Astrocyte of the cerebellum (primary cell): ENCODE measurements at regions of chr12 and their contacts with region 1.

Region 1: DNA sequence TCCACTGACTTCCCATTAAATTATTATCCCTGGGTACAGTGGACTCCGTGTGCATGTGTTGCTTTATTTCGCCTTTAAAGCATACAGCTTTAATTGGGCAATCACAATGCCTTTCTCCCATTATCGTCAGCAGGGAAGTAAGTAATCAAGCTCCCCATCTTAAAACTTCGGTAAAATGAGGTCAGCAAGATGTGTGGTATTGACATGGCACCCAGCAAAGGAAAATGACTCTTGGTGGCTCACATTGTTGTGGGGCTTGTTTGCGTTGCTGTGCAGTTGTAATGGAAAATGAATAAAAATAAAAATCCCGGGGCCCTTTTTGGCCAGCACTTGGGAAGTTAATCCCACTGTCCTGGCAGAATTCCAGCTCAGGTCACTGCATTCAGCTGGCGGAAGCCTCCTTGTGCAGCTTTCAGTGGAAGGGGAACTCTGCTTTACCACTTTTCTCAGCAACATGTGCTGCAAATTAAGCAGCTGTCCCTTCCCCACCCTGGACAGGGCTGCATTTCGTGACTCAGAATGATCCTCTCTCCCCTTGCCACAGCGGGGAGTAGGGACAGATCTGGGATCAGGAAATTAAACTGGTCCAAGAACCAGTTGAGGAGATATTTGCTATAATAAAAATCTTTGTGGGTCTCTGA is 13.9 kb upstream of the ATP2A2 start:
- DNase-seq: peak; percentile 68
- H3K4me3 ChIP-seq: no peak overlapping the region
- CTCF ChIP-seq: no peak

Region 2: DNA sequence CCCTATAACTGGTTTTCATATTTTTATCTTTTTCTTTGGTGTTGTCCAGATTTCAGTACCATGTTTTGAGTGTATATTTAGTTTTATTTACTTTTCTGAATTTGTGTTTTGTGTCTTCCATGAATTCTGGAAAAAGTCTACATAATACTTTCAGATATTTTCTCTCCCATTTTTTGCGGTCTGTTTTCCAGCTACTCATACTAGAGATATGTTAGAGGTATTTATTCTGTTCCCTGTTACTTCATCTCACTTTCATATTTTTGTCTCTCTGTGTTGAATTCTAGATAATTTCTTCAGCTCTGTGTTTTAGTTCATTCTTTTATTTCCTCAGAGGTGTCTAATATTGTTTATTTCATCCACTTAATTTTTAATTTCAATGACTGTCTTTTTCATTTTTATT is 68.7 kb before region 1 on chr12:
- in situ Hi-C with region 1: no loop called
- DNase-seq: no peak
- H3K4me3 ChIP-seq: no peak overlapping the region
- CTCF ChIP-seq: no peak

Region 3: GRCh38 chr12:110217996-110218674 is 49.0 kb before region 1 on chr12:
- in situ Hi-C with region 1: loop called (anchors 5 kb)
- DNase-seq: no peak
- H3K4me3 ChIP-seq: no peak overlapping the region
- CTCF ChIP-seq: no peak

Region 4: GRCh38 chr12:110355073-110355472 is 88.0 kb after region 1 on chr12:
- in situ Hi-C with region 1: no loop called
- DNase-seq: no peak
- H3K4me3 ChIP-seq: no peak overlapping the region
- CTCF ChIP-seq: peak; percentile 51